Activated B cell treated with CpG ODN at 0.5 μM for 24 hours (primary cell): ENCODE measurements at regions of chr1 and their contacts with region 1.

Region 1: GRCh38 chr1:109620841-109621286 is 1.2 kb downstream of the AMPD2 start:
- DNase-seq: peak; percentile 80
- ATAC-seq: peak; percentile 67
- H3K4me3 Mint-ChIP-seq: peak overlapping the region; percentile 90
- H3K27ac Mint-ChIP-seq: peak overlapping the region; percentile 93
- H3K4me1 Mint-ChIP-seq: peaks cover 78% of the 10 kb centered on the region
- H3K27me3 Mint-ChIP-seq: no peaks in the 10 kb centered on the region
- CTCF ChIP-seq: no peak

Region 2: DNA sequence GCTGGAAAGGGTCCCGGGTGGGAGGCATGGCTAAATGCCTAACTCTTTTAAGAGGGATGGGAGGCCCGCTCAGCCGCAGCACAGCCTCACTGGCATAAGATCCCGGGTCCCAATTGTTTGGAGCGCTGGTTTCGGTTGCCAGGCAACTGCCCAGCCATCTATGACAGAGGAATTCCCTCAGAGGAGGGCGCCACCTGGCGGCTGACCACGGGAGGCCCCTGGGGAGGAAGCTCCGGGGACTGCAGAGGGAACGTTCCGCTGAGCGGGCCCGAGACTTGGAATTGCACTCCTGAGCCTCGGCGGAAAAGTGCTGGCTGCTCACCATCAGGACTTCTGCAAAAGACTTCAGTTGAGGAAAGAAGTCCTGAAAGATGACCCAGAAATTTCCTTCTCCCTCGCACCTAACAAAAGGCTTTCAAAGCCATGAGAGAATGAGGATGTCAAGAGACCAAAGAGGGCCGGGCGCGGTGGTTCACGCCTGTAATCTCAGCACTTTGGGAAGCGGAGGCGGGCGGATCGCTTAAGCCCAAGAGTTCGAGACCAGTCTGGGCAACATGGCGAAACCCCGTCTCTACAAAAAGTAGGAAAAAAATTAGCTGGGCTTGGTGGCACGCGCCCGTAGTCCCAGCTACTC is 508.1 kb before region 1 on chr1:
- CTCF ChIA-PET with region 1: no interaction called
- POLR2A ChIA-PET with region 1: no interaction called
- intact Hi-C with region 1: loop called (anchors 5 kb)
- DNase-seq: peak; percentile 83
- ATAC-seq: peak; percentile 75
- H3K4me3 Mint-ChIP-seq: peak overlapping the region; percentile 77
- H3K27ac Mint-ChIP-seq: peak overlapping the region; percentile 56
- H3K4me1 Mint-ChIP-seq: peaks cover 25% of the 10 kb centered on the region
- H3K27me3 Mint-ChIP-seq: peaks cover 27% of the 10 kb centered on the region
- CTCF ChIP-seq: peak; percentile 88

Region 3: GRCh38 chr1:109687616-109688499 is 67.0 kb after region 1 on chr1 and contains the start of gene GSTM1:
- CTCF ChIA-PET with region 1: no interaction called
- POLR2A ChIA-PET with region 1: interaction called, 17 read pairs
- intact Hi-C with region 1: no loop called
- DNase-seq: peak; percentile 62
- ATAC-seq: peak; percentile 98
- H3K4me3 Mint-ChIP-seq: peak within 1 kb of the TSS; percentile 89
- H3K27ac Mint-ChIP-seq: peak within 1 kb of the TSS; percentile 87
- H3K4me1 Mint-ChIP-seq: peaks cover 11% of the 10 kb centered on the region
- H3K27me3 Mint-ChIP-seq: no peaks in the 10 kb centered on the region
- CTCF ChIP-seq: no peak
- total RNA-seq, gene GSTM1: 22.2 and 22.4 TPM in 2 replicates